Panc1 (cell line): ENCODE measurements at regions of chr7 and their contacts with region 1.

Region 1: DNA sequence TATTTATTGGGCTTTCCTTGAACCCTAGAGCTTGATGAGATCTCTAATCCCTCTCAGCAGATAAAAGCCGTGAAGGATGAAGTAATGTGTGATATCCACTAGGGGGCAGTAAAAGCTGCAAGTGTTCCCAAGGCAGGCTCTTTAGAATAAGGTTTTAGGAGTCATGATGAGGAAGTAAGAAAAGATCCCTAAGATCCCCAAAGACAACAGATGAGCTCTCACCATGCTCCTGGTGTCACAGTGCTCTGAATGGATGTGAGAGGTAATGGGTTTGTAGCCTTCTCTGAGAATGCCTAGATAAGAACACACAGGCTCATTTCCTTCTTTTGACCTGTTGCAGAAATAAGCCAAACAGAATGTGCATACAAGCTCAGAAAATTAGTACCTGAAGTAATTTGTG is 70.4 kb upstream of the ITPRID1 start:
- DNase-seq: peak; percentile 30
- ATAC-seq: peak; percentile 84
- H3K4me3 ChIP-seq: no peak overlapping the region
- H3K27ac ChIP-seq: no peak overlapping the region
- H3K4me1 ChIP-seq: no peaks in the 10 kb centered on the region
- H3K27me3 ChIP-seq: peaks cover 2% of the 10 kb centered on the region; the same call in 1 of the 2 replicates
- CTCF ChIP-seq: peak; percentile 87

Region 2: GRCh38 chr7:31512166-31512565 is 68.7 kb after region 1 on chr7:
- CTCF ChIA-PET with region 1: no interaction called
- POLR2A ChIA-PET with region 1: no interaction called
- in situ Hi-C with region 1: no loop called
- intact Hi-C with region 1: no loop called
- DNase-seq: no peak
- ATAC-seq: no peak
- H3K4me3 ChIP-seq: no peak overlapping the region
- H3K27ac ChIP-seq: no peak overlapping the region
- H3K4me1 ChIP-seq: no peaks in the 10 kb centered on the region
- H3K27me3 ChIP-seq: no peaks in the 10 kb centered on the region
- CTCF ChIP-seq: no peak

Region 3: GRCh38 chr7:31633894-31634494 is 190.5 kb after region 1 on chr7:
- CTCF ChIA-PET with region 1: no interaction called
- POLR2A ChIA-PET with region 1: no interaction called
- in situ Hi-C with region 1: no loop called
- intact Hi-C with region 1: loop called (anchors 2 kb)
- DNase-seq: peak; percentile 54
- ATAC-seq: peak; percentile 96
- H3K4me3 ChIP-seq: no peak overlapping the region
- H3K27ac ChIP-seq: no peak overlapping the region
- H3K4me1 ChIP-seq: no peaks in the 10 kb centered on the region
- H3K27me3 ChIP-seq: no peaks in the 10 kb centered on the region
- CTCF ChIP-seq: peak; percentile 84